ENCODE measurements at regions of chr9 and their contacts with region 1.

Region 1: DNA sequence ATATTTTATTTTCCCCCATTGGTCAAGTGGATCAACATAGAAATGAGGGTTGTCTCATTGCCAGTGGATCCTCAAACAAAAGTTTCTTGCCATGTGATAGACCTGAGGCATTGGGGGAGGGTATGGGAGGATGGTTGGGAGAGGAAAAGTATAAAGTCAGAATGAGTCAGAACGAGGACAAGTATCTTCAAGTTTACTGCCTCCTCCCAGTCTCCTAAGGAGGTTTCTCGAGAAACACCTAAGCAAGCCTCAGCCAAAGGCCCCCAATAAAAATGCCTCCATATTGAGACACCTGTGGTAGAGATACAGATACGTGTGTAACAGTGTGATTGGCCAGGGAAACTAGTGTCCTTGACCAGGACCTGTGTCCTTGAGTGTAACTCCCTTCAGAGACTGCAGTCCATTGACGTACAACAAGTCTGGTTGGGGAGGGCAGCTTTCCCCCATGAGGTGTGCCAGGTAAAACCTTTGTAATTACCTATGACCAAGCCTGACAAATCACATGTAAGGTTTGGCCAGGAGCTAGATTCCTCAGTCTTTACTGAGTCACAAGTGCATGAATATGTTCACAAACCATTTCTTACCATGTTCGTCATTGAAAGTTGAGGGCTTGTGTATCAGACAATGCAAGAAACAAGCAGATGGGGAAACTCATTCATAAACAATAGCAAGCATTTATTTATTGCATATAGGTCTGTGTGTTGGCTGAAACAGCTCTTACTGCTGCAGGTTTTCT is 198.6 kb upstream of the SH3GL2 start:
- DNase-seq: no peak
- ATAC-seq: no peak
- H3K4me3 ChIP-seq: no peak overlapping the region
- H3K27ac ChIP-seq: no peak overlapping the region
- H3K4me1 ChIP-seq: no peaks in the 10 kb centered on the region
- H3K27me3 ChIP-seq: no peaks in the 10 kb centered on the region
- CTCF ChIP-seq: no peak
- EP300 ChIP-seq: no peak
- POLR2A ChIP-seq: no peak
- RAD21 ChIP-seq: no peak

Region 2: DNA sequence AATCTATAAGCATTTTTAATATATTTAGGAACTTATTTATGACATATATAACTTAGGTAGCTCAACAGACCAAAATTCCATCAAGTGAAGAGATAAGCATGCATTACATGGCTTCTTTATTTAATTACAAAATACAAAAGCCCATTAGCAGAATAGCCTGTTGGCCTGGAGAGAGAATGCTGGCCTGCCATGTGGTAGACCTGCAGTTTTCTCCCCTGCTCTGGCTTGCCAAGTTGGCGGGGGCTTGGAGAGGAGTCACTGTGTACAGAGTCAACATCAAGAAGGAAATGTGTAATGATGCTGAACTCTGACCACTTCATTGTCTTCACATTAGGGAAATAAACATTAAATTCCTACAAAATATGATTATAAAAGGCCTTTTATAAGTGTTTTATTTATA is 315.2 kb before region 1 on chr9:
- CTCF ChIA-PET with region 1: no interaction called
- POLR2A ChIA-PET with region 1: no interaction called
- in situ Hi-C with region 1: no loop called
- intact Hi-C with region 1: loop called (anchors 5 kb)
- DNase-seq: no peak
- ATAC-seq: no peak
- H3K4me3 ChIP-seq: no peak overlapping the region
- H3K27ac ChIP-seq: no peak overlapping the region
- H3K4me1 ChIP-seq: no peaks in the 10 kb centered on the region
- H3K27me3 ChIP-seq: no peaks in the 10 kb centered on the region
- CTCF ChIP-seq: no peak
- EP300 ChIP-seq: no peak
- POLR2A ChIP-seq: no peak
- RAD21 ChIP-seq: no peak

Region 3: DNA sequence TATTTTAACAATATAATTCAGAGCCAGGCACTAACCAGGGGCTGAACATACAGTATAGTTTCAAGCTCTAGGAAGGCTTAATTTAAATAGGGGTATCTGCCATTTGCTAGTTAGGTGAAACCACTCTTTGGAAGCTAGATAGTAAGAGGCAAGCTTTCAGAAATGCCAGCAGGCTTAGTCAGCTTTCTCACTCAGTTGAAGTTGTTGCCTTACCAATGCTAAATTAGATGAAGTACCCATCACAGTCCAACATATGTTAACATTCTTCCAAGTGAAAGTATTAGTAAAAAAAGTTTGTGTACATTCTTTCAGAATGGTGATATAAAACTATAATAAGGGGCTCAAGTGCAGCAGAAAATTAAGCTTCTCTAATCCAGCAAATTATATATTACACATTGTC is 30.5 kb before region 1 on chr9:
- CTCF ChIA-PET with region 1: no interaction called
- POLR2A ChIA-PET with region 1: no interaction called
- in situ Hi-C with region 1: no loop called
- intact Hi-C with region 1: no loop called
- DNase-seq: no peak
- ATAC-seq: no peak
- H3K4me3 ChIP-seq: no peak overlapping the region
- H3K27ac ChIP-seq: no peak overlapping the region
- H3K4me1 ChIP-seq: no peaks in the 10 kb centered on the region
- H3K27me3 ChIP-seq: no peaks in the 10 kb centered on the region
- CTCF ChIP-seq: no peak
- EP300 ChIP-seq: no peak
- POLR2A ChIP-seq: no peak
- RAD21 ChIP-seq: no peak

Region 4: DNA sequence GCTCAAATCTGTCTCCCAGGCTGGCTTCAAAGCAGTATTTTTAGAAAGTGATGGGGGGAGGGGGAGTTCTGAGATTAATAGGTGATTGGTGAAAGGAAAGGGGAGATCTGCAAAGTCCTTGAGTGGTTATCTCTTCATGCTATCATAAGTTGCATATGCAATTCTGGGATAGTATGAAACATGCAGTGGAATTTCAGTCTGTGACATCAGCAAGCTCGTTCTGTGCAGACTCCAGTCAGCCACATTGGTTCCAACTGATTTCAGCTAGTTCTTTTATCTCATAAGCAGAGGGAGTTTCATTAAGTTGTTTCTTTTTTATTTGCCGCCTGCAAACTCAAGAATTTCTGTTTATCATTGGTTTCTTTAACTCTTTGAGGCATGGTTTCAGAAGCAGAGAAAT is 18.1 kb after region 1 on chr9:
- CTCF ChIA-PET with region 1: no interaction called
- POLR2A ChIA-PET with region 1: no interaction called
- in situ Hi-C with region 1: no loop called
- intact Hi-C with region 1: no loop called
- DNase-seq: no peak
- ATAC-seq: no peak
- H3K4me3 ChIP-seq: no peak overlapping the region
- H3K27ac ChIP-seq: no peak overlapping the region
- H3K4me1 ChIP-seq: no peaks in the 10 kb centered on the region
- H3K27me3 ChIP-seq: no peaks in the 10 kb centered on the region
- CTCF ChIP-seq: no peak
- EP300 ChIP-seq: no peak
- POLR2A ChIP-seq: no peak
- RAD21 ChIP-seq: no peak

Region 5: DNA sequence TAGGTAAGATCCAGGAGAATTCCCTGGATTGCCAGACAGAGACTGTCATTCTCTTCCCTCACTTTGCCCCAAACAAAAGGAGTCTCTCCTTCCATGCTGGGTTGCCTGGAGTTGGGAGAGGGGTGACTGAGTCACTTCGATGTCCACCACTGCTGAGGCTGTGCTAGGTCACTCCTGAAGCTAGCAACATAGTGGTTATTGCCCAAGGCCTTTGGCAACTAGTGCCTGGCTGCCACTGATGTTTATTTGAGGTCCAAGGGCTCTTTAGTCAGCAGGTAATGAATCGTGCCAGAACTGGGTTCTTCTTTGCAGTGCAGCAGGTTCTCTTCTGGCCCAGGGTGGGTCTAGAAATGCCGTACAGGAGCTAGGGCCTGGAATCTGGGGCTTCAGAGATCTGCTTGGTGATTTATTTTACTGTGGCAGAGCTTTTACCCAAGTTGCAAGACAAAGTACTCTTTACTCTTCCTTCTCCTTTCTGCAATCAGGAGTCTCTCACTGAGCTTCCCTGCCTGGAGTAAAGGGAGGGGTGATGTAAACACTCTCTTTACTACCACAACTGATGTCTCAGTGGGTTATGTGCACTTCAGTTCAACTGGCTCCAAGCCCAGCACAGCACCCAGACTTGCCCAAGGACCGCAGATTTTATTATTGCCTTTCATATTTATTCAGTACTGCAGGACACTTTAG is 42.8 kb after region 1 on chr9:
- CTCF ChIA-PET with region 1: no interaction called
- POLR2A ChIA-PET with region 1: no interaction called
- in situ Hi-C with region 1: no loop called
- intact Hi-C with region 1: loop called (anchors 10 kb)
- DNase-seq: no peak
- ATAC-seq: no peak
- H3K4me3 ChIP-seq: no peak overlapping the region
- H3K27ac ChIP-seq: no peak overlapping the region
- H3K4me1 ChIP-seq: no peaks in the 10 kb centered on the region
- H3K27me3 ChIP-seq: no peaks in the 10 kb centered on the region
- CTCF ChIP-seq: no peak
- EP300 ChIP-seq: no peak
- POLR2A ChIP-seq: no peak
- RAD21 ChIP-seq: no peak